Motor neuron (in vitro differentiated cells): ENCODE measurements at regions of chr10 and their contacts with region 1.

Region 1: DNA sequence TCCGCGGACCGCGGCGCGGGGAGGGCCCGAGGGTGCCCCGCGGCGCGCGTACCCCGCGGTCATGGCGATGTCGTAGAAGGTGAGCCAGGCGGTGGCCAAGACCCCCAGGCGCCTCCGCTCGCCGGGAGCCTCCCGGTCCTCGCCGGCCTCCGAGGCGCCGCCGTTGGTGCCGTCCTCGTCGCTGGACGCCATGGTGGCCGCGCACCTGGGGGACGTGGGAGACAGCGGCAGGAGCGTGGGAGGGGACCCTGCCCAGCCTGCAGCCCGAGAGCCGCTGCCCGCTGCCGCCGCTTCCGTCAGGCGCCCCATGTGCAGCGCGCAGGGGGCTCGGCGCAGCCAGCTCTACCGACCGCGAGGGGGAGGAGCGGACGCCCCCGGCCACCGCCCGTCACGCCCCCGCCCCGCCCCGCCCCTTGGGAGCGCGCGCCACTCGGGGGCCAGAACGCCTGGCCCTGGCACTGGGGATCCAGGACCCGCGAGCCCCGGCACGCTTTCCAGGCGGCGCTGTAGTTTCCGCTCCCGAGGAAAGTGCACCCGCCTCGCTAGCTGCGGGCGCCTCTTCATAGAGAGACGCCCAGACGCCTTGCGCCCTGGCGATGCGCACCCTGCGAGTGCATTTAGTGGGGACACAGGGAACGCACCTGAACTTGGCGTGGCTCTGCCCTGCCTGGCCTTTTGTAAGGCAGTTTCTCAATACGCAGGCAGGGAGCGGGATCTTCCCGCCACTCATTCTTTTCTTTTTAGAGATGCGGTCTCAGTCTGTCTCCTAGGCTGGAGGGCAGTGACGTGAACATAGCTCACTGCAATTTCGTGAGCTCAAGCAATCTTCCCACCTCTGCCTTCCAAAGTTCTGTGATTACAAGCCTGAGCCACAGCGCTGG is at the start of gene HACD1:
- ATAC-seq: peak; percentile 69 to 89 (median 86)
- H3K4me3 ChIP-seq: peak within 1 kb of the TSS; percentile 59 to 88 (median 74)
- H3K27ac ChIP-seq: peak within 1 kb of the TSS; percentile 0 to 23
- H3K4me1 ChIP-seq: no peaks in the 10 kb centered on the region
- total RNA-seq, gene HACD1: 1.3 to 16.0 (median 6.5) TPM

Region 2: DNA sequence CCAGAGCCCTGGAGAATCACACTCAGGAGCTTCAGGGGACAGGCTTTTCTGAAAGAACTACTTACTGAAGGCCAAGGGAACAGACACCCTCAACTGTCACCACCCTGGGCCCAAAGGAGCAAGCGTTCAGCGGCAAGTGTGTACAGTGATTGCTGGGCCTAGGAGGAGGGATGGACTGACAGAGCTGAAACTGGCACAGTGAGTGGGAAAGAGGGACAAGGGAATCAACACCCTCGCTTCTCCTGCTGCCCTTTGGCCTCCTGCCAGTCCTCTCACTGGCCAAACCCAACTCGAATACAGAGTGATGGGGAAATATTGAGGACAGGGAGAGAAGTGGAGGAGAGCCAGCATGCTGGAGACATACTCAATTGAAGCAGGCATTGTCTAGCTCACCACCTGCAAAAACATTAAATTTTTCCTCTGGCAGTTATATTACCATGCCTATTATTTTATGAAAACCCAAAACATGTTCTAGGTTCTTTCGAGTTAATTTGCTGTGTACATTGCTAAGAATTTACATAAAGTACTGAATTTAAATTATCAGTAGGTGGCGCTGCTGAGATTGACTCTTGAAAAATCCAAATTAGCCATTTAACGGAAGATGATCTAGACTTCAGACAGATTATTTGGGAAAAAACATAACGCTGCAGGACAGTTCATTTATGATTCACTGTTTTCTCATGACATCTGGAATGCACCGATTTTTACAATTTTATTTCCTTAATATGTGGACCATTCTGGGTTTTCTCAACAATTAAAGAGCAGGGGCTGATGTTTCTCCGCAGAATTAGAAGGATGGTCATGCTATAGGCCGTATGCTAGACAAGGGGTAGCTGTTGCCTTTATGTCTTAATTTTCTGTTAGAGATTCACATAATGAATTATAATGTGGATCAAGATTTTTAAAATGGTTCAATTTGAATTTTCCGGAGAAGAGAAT is 120.0 kb after region 1 on chr10:
- in situ Hi-C with region 1: loop called in 3 of 9 experiments (anchors 10 to 25 kb)
- ATAC-seq: peak in 3 of 8 experiments; percentile 33 to 57 (median 57)
- H3K4me3 ChIP-seq: no peak overlapping the region
- H3K27ac ChIP-seq: no peak overlapping the region
- H3K4me1 ChIP-seq: no peaks in the 10 kb centered on the region

Region 3: DNA sequence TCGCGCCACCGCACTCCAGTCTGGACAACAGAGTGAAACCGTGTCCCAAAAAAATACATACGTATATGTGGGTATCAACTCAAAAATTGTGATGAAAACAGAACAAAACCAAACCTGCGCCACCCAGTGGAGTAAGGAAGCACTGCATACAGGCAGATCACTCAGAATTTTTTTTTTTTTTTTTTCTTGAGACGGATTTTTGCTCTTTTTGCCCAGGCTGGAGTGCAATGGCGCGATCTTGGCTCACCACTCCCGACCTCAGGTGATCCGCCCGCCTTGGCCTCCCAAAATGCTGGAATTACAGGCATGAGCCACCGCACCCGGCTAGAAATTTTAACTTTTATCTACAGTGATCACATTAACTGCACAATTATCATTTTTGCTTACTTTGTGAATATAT is 125.6 kb after region 1 on chr10:
- in situ Hi-C with region 1: loop called in 3 of 9 experiments (anchors 10 to 25 kb)
- ATAC-seq: peak in 2 of 8 experiments; percentile 13 to 40
- H3K4me3 ChIP-seq: no peak overlapping the region
- H3K27ac ChIP-seq: no peak overlapping the region
- H3K4me1 ChIP-seq: no peaks in the 10 kb centered on the region

Region 4: GRCh38 chr10:17779784-17780183 is 162.5 kb after region 1 on chr10:
- in situ Hi-C with region 1: no loop called
- ATAC-seq: peak in 1 of 8 experiments; percentile 52
- H3K4me3 ChIP-seq: no peak overlapping the region
- H3K27ac ChIP-seq: no peak overlapping the region
- H3K4me1 ChIP-seq: no peaks in the 10 kb centered on the region

Region 5: GRCh38 chr10:17872191-17873091 is 255.2 kb after region 1 on chr10:
- in situ Hi-C with region 1: loop called in 1 of 9 experiments (anchors 25 kb)
- ATAC-seq: peak in 6 of 8 experiments; percentile 37 to 91 (median 78)
- H3K4me3 ChIP-seq: no peak overlapping the region
- H3K27ac ChIP-seq: no peak overlapping the region
- H3K4me1 ChIP-seq: peaks cover 0 to 9% of the 10 kb centered on the region in 2 donors

Region 6: DNA sequence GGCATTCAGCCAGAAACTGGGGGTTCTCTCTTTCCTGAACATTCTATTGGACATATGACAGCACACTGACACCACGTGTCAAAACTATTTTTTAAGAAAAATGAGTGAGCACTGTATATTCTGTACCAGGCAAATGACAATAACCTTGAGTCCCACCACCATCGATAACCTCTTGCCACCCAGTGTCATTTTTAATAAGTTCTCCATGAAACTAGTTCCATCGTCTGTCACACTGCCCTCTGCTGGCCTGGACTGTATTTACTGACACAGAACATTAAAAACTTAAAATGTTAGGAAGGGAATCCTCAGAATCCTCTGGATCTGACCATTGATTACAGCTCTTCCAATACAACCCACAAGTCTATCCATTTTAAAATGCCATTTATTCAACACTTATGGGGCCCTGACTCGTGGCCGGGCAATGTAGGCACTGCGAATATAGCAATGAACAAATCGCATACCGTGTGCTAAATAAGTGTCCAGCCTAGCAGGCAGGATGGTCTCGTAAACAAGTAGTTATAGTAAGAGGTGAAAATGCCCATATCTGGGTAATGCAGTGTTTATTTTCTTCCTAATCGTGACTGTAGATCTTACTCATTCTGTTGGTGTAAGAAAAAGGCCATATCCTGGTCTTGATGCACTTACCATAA is 487.1 kb after region 1 on chr10:
- in situ Hi-C with region 1: loop called in 1 of 9 experiments (anchors 25 kb)
- ATAC-seq: peak in 2 of 8 experiments; percentile 16 to 38
- H3K4me3 ChIP-seq: no peak overlapping the region
- H3K27ac ChIP-seq: no peak overlapping the region
- H3K4me1 ChIP-seq: no peaks in the 10 kb centered on the region

Region 7: DNA sequence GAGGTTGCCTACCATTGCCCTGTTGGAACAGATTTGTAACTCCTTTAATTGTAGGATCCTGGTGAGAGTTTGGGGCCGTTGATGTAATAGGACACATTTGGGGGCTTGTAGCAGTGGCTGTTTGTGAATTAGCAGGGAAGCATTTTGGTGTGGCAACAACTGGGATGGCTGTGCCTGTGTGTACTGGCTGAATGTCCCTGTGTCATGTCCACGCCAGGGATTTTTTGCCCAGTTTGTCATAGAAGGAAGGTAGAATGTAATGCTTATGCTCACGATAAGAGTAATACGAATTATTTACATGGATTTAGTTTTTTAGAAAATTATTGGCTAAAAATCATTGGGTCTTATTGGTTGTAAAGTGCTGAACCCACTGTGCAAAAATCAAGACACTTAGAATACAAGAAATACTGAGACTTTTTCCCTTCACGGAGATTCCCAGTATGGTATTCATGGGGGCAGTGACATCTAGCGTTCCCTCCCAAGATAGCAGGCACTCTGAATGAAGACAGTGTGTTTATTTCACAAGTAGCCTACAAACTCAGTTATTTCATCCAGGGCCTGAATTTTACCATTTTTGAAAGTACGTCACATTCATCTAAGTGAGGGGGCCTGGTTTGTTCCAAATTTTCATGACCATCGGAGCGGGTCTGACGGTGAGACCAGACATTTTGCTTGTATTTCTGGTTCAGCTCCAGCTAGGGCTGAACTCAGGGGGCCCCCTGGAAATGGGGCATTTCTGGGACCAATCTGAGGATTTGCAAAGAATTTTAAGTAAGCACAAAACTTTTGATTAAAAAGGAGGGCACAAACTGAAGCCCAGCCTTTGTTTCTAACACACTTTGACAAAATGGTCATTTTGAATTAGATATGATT is 597.7 kb after region 1 on chr10:
- in situ Hi-C with region 1: loop called in 2 of 9 experiments (anchors 25 kb)
- ATAC-seq: peak; percentile 63 to 86 (median 70)
- H3K4me3 ChIP-seq: no peak overlapping the region
- H3K27ac ChIP-seq: no peak overlapping the region
- H3K4me1 ChIP-seq: peaks cover 0 to 3% of the 10 kb centered on the region in 2 donors

Region 8: DNA sequence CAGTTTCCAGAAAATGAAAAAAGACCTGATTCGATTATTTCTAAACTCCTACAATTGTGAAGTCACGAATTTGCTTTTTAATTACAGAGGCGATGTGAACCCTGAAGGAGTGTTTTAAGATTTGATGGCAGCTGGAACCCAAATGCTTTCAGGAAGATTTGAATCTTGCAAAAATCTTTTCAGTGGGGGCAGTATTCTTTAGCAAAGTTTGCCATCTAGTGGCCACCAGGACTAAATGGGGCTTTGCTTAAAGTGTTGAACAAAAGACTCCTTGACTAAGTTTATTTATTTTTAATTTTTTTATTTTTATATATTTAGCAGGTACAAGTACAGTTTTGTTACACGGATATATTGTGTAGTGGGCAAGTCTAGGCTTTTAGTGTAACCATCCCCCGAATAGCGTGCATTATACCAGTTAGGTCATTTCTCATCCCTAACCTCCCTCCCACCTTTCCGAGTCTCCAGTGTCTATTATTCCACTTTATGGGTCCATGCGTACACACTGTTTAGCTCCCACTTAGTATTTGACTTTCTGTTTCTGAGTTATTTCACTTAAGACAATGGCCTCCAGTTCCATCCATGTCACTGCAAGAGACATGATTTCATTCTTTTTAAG is 621.7 kb after region 1 on chr10:
- in situ Hi-C with region 1: loop called in 4 of 9 experiments (anchors 25 kb)
- ATAC-seq: peak in 3 of 8 experiments; percentile 20 to 39 (median 27)
- H3K4me3 ChIP-seq: no peak overlapping the region
- H3K27ac ChIP-seq: no peak overlapping the region
- H3K4me1 ChIP-seq: peaks cover 0 to 2% of the 10 kb centered on the region in 2 donors